Mammary epithelial cell (primary cell): ENCODE measurements at regions of chr5 and their contacts with region 1.

Region 1: DNA sequence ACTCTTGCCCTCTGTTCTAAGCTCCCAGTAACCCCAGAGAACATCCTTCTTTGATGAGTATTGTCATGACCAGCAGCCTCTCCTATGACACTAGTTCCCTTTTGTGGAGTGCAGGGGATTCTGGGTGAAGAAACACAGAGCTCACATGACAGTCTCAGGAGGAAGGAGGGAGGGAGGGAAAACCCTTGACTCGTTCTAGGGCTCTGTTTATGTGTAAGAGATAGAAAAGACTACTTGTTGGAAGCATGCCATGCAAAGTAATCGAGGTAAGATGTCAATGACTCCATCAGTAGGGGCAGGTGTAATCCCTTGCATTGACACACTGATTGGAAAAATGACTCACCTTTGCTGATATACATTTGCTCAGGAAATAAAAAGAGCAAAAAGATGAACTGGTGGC is 190.2 kb upstream of the ELL2 start:
- DNase-seq: no peak
- H3K4me3 ChIP-seq: no peak overlapping the region
- H3K27ac ChIP-seq: no peak overlapping the region
- H3K4me1 ChIP-seq: peaks cover 52% of the 10 kb centered on the region
- H3K27me3 ChIP-seq: no peaks in the 10 kb centered on the region
- CTCF ChIP-seq: no peak

Region 2: GRCh38 chr5:95949810-95950209 is 202.1 kb before region 1 on chr5:
- CTCF ChIA-PET with region 1: no interaction called
- dilution Hi-C with region 1: no loop called
- in situ Hi-C with region 1: no loop called
- intact Hi-C with region 1: no loop called
- DNase-seq: no peak
- H3K4me3 ChIP-seq: peak overlapping the region in 1 of 3 experiments; percentile 21
- H3K27ac ChIP-seq: no peak overlapping the region
- H3K4me1 ChIP-seq: peaks cover 15% of the 10 kb centered on the region
- H3K27me3 ChIP-seq: no peaks in the 10 kb centered on the region
- CTCF ChIP-seq: no peak

Region 3: DNA sequence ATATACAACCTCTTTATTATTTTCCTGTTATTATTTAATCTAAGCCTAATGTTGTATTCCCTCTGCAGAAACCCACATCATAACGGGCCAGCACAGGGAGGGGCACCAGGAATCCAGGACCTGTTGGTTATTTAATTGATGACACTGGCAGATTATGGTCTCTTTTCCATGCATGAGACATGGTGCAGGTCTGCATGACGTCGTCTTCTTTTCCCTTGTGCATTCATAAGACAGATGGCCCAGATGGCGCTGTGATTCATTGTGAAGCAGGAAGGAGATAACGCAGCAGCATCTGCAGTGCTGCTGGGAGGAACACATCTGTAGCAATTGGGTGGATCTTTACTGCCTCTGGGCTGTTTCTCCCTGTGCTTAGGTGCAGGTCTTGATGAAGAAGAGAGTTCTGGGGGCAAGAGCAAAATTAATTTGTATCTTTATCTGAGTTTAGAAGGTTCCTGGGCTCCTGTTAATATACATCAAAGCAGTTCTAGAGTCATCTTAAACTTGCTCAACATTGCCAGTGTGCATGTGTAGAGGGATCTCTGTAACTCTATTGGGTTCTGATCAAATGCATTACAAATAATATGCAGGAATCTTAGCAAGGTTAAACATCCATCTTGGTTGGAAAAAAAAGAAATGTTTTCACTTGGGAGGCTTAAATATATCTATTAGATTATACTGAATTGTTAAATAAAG is 105.0 kb after region 1 on chr5:
- CTCF ChIA-PET with region 1: no interaction called
- dilution Hi-C with region 1: loop called (anchors 5 kb)
- in situ Hi-C with region 1: no loop called
- intact Hi-C with region 1: no loop called
- DNase-seq: peak; percentile 20
- H3K4me3 ChIP-seq: no peak overlapping the region
- H3K27ac ChIP-seq: no peak overlapping the region
- H3K4me1 ChIP-seq: peaks cover 67% of the 10 kb centered on the region
- H3K27me3 ChIP-seq: no peaks in the 10 kb centered on the region
- CTCF ChIP-seq: no peak